ENCODE measurements at regions of chr1 and their contacts with region 1.

Region 1: GRCh38 chr1:21232044-21232443 is 55.3 kb upstream of the EIF4G3 start:
- DNase-seq: peak; percentile 52
- ATAC-seq: no peak
- H3K4me3 Mint-ChIP-seq: no peak overlapping the region
- H3K27ac Mint-ChIP-seq: no peak overlapping the region
- H3K4me1 Mint-ChIP-seq: no peaks in the 10 kb centered on the region
- H3K27me3 Mint-ChIP-seq: no peaks in the 10 kb centered on the region

Region 2: DNA sequence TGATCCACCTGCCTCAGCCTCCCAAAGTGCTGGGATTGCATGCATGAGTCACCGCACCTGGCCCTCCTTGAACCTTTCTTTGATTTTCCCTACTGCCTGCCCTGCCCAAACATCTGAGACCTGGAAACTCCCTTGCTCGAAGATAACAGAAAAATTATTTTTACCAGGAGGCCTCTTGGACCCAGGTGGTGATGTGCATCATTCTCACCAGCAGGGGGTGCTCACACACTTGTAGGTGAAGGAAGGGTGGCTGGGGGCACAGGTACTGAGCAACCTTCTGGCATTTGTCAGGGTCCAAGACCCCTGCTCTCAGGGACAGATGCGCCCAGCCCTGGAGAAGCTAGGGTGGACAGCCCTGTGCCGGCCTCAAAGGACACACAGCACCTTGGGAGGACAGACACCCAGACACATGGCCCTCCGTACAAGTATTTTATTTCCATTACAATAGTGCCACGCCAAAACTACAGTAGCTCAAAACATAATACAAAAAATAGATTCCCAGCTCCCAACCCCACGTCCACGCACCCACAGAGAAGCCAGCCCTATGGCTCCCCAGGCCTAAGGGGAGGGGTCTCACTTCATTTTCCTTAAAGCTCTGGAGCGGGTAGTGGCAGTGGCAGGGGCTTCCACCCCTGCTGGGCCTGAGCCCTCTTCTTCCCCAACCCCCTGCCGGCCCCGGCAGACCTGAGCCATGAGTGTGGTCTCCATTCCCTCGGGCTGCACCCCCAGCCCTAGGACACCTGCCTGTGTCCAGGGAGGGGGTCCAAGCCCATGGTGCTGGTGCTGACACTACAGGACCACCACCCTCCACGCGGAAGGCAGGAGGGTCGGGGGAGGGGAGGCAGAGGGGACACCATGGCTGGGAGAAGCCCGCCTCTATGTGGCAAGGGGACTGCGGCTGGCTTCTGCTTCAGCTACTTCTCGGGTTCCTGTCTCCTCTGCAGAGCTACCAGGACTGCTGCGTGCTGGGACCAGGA is 14.9 kb before region 1 on chr1:
- CTCF ChIA-PET with region 1: interaction called, 15 read pairs
- POLR2A ChIA-PET with region 1: no interaction called
- DNase-seq: peak; percentile 81
- ATAC-seq: peak; percentile 64
- H3K4me3 Mint-ChIP-seq: no peak overlapping the region
- H3K27ac Mint-ChIP-seq: no peak overlapping the region
- H3K4me1 Mint-ChIP-seq: no peaks in the 10 kb centered on the region
- H3K27me3 Mint-ChIP-seq: no peaks in the 10 kb centered on the region

Region 3: GRCh38 chr1:21244986-21245687 is 13.1 kb after region 1 on chr1:
- CTCF ChIA-PET with region 1: interaction called, 16 read pairs
- POLR2A ChIA-PET with region 1: no interaction called
- DNase-seq: no peak
- ATAC-seq: no peak
- H3K4me3 Mint-ChIP-seq: no peak overlapping the region
- H3K27ac Mint-ChIP-seq: no peak overlapping the region
- H3K4me1 Mint-ChIP-seq: no peaks in the 10 kb centered on the region
- H3K27me3 Mint-ChIP-seq: no peaks in the 10 kb centered on the region